Activated CD4-positive, alpha-beta T cell treated with anti-CD3 and anti-CD28 coated beads, Interleukin-2, amount 10 ng/mL, durations not matched to agents 24 days and 14 days (primary cell): ENCODE measurements at regions of chrX and their contacts with region 1.

Region 1: DNA sequence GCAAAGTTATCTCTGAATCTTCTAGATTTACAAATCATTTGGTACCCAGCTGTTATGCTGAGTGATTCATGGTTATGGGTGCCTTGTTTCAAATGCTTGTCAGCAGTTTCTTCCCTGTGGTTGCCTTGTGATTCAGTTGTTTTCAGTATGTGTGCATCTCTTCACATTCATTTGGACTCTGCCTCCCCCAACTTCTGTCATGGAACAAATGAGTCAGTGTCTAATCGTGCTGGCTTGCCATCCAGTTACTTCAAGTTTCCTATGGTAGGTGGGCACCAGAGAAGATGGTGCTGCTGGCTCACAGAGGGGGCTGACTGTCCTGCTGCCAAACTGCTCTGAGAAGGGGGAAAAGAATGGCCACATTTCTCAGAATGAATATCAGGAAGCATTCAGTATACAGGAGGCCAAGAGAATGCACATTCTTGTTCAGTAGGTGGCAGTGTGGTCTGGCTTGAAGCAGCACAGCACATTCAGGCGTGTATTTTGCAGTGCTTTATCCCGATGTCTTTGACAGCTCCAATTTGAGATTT is 260.9 kb downstream of the GLUD2 start:
- DNase-seq: peak; percentile 82
- H3K4me3 Mint-ChIP-seq: peak overlapping the region; percentile 64
- H3K27ac Mint-ChIP-seq: peak overlapping the region; percentile 96
- H3K4me1 Mint-ChIP-seq: peaks cover 20% of the 10 kb centered on the region
- H3K27me3 Mint-ChIP-seq: peaks cover 2% of the 10 kb centered on the region

Region 2: DNA sequence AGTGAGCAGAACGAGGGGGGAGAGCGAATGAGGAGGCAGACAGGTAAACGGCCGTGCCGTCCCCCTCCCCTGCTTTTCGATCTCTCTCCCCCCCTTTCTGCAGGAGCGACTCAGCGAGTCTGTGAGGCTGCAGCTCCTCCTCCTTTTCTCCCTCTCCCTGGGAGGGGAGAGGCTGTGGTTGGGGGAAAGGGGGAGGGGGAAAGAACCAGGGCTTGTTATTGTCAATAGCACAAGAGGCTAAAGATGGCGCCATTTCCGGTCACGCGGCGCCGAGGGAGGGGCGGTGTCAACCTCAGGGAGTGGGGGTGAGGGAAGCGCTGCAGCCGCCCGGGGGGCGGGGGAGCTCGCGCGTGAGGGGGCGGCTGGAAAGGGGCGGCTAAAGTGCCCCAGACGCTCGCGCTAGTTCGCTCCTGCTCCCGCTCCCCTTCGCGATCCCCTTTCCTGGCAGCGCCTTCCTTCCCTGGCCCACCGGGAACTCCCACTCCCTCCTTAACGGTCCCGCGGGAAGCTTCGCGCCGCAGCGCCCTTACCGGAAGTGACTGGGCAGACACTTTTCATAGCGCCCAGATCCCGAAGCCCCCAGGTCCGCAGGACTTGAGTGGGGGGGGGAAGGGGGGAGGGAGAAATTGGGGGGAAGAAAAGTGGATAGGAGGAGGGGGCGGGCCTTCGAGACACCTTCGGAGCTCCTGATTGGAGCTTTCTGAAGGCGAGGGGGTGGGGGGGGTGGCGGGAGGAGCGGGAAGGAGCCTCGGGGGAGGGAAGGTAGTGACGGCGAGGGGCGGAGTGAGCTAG is 747.3 kb before region 1 on chrX and contains the start of gene CUL4B:
- intact Hi-C with region 1: loop called (anchors 1 kb)
- DNase-seq: peak; percentile 97
- H3K4me3 Mint-ChIP-seq: peak within 1 kb of the TSS; percentile 99
- H3K27ac Mint-ChIP-seq: peak within 1 kb of the TSS; percentile 99
- H3K4me1 Mint-ChIP-seq: peaks cover 21% of the 10 kb centered on the region
- H3K27me3 Mint-ChIP-seq: no peaks in the 10 kb centered on the region
- total RNA-seq, gene CUL4B: 30.4 and 30.5 TPM in 2 replicates

Region 3: GRCh38 chrX:120797188-120797851 is 511.0 kb before region 1 on chrX:
- intact Hi-C with region 1: loop called (anchors 1 kb)
- DNase-seq: no peak
- H3K4me3 Mint-ChIP-seq: peak overlapping the region; percentile 55
- H3K27ac Mint-ChIP-seq: peak overlapping the region; percentile 94
- H3K4me1 Mint-ChIP-seq: peaks cover 35% of the 10 kb centered on the region
- H3K27me3 Mint-ChIP-seq: no peaks in the 10 kb centered on the region

Region 4: DNA sequence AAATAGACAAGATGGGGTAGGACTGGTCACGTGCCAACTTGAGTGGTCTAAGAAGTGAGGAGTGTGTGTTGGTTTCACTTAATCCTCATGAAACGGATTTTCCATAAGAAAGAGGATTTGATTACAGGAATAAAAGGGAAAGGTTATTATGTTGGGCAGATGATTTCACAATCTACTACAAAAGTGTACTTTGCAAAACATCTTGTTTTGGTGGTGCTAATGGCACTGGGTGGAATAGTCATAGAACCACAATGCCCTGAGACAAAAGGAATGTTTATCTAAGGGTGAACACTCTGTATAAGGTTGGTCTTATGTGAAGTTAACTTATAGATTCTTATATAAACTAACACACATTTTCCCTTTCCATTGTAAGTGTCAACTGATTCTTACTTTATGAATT is 215.3 kb before region 1 on chrX:
- intact Hi-C with region 1: no loop called
- DNase-seq: no peak
- H3K4me3 Mint-ChIP-seq: no peak overlapping the region
- H3K27ac Mint-ChIP-seq: no peak overlapping the region
- H3K4me1 Mint-ChIP-seq: no peaks in the 10 kb centered on the region
- H3K27me3 Mint-ChIP-seq: no peaks in the 10 kb centered on the region

Region 5: DNA sequence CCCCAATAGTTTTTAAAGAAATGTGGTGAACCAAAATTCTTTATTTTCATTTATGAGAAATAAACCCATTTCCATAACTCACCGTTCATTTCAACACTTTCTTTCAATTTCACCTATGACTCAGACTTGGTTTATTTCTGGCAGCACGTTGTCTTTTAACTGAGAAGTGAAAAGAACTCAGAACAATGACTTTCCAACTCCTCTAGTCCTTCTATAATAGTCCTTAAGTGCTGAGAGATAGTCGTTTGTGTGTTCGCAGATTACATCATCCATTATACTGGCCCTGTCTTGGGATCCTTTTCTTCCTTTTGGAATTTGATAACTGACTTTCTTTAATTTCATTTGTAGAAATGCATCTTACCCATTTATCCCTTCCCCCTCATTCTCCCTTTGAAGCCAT is 147.4 kb before region 1 on chrX:
- intact Hi-C with region 1: loop called (anchors 1 kb)
- DNase-seq: no peak
- H3K4me3 Mint-ChIP-seq: peak overlapping the region; percentile 46
- H3K27ac Mint-ChIP-seq: peak overlapping the region; percentile 79
- H3K4me1 Mint-ChIP-seq: peaks cover 25% of the 10 kb centered on the region
- H3K27me3 Mint-ChIP-seq: no peaks in the 10 kb centered on the region

Region 6: DNA sequence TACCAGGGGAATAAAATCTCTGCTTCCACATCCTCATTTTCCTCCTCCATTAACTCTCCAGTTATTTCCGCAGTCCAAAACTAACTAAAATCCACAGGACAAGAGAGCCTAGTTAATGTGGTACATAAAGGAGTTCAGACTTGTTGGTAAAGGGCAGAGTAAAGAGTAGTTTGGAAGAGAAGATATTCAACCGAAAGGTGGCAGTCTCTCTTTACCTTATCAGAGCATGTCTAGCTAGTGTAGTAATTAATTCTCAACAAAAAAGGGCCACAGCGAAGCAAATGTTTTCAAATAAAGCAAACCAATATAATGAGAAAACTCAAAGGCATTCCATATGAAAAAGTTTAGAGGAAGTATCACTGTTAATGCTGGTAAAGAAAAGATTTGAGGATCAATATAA is 25.6 kb after region 1 on chrX:
- intact Hi-C with region 1: no loop called
- DNase-seq: no peak
- H3K4me3 Mint-ChIP-seq: no peak overlapping the region
- H3K27ac Mint-ChIP-seq: no peak overlapping the region
- H3K4me1 Mint-ChIP-seq: no peaks in the 10 kb centered on the region
- H3K27me3 Mint-ChIP-seq: no peaks in the 10 kb centered on the region

Region 7: GRCh38 chrX:121504148-121504547 is 195.8 kb after region 1 on chrX:
- intact Hi-C with region 1: loop called (anchors 5 kb)
- DNase-seq: peak; percentile 52
- H3K4me3 Mint-ChIP-seq: no peak overlapping the region
- H3K27ac Mint-ChIP-seq: no peak overlapping the region
- H3K4me1 Mint-ChIP-seq: no peaks in the 10 kb centered on the region
- H3K27me3 Mint-ChIP-seq: no peaks in the 10 kb centered on the region

Region 8: GRCh38 chrX:121558886-121559285 is 250.5 kb after region 1 on chrX:
- intact Hi-C with region 1: no loop called
- DNase-seq: no peak
- H3K4me3 Mint-ChIP-seq: no peak overlapping the region
- H3K27ac Mint-ChIP-seq: no peak overlapping the region
- H3K4me1 Mint-ChIP-seq: no peaks in the 10 kb centered on the region
- H3K27me3 Mint-ChIP-seq: no peaks in the 10 kb centered on the region

Region 9: GRCh38 chrX:122813876-122814275 is 1505.5 kb after region 1 on chrX:
- intact Hi-C with region 1: loop called (anchors 5 kb)
- DNase-seq: no peak
- H3K4me3 Mint-ChIP-seq: no peak overlapping the region
- H3K27ac Mint-ChIP-seq: no peak overlapping the region
- H3K4me1 Mint-ChIP-seq: no peaks in the 10 kb centered on the region
- H3K27me3 Mint-ChIP-seq: no peaks in the 10 kb centered on the region